Mammary epithelial cell (primary cell): ENCODE measurements at regions of chr13 and their contacts with region 1.

Region 1: GRCh38 chr13:97460004-97460775 is 26.2 kb downstream of the RAP2A start:
- DNase-seq: no peak
- H3K4me3 ChIP-seq: no peak overlapping the region
- H3K27ac ChIP-seq: no peak overlapping the region
- H3K4me1 ChIP-seq: no peaks in the 10 kb centered on the region
- H3K27me3 ChIP-seq: no peaks in the 10 kb centered on the region
- CTCF ChIP-seq: no peak

Region 2: GRCh38 chr13:96781141-96781540 is 679.0 kb before region 1 on chr13:
- CTCF ChIA-PET with region 1: no interaction called
- dilution Hi-C with region 1: no loop called
- in situ Hi-C with region 1: no loop called
- intact Hi-C with region 1: no loop called
- DNase-seq: peak; percentile 22
- H3K4me3 ChIP-seq: no peak overlapping the region
- H3K27ac ChIP-seq: no peak overlapping the region
- H3K4me1 ChIP-seq: no peaks in the 10 kb centered on the region
- H3K27me3 ChIP-seq: no peaks in the 10 kb centered on the region
- CTCF ChIP-seq: no peak

Region 3: GRCh38 chr13:97521726-97522125 is 61.5 kb after region 1 on chr13:
- CTCF ChIA-PET with region 1: no interaction called
- dilution Hi-C with region 1: no loop called
- in situ Hi-C with region 1: loop called in 1 of 2 experiments (anchors 10 kb)
- intact Hi-C with region 1: no loop called
- DNase-seq: no peak
- H3K4me3 ChIP-seq: no peak overlapping the region
- H3K27ac ChIP-seq: no peak overlapping the region
- H3K4me1 ChIP-seq: no peaks in the 10 kb centered on the region
- H3K27me3 ChIP-seq: no peaks in the 10 kb centered on the region
- CTCF ChIP-seq: no peak